Activated CD4-positive, alpha-beta T cell treated with anti-CD3 and anti-CD28 coated beads for 36 hours (primary cell): ENCODE measurements at regions of chr17 and their contacts with region 1.

Region 1: GRCh38 chr17:30124273-30124796 is 7.7 kb downstream of the NSRP1 start:
- DNase-seq: no peak
- ATAC-seq: no peak
- H3K4me3 Mint-ChIP-seq: no peak overlapping the region
- H3K27ac Mint-ChIP-seq: no peak overlapping the region
- H3K4me1 Mint-ChIP-seq: peaks cover 44% of the 10 kb centered on the region
- H3K27me3 Mint-ChIP-seq: no peaks in the 10 kb centered on the region

Region 2: DNA sequence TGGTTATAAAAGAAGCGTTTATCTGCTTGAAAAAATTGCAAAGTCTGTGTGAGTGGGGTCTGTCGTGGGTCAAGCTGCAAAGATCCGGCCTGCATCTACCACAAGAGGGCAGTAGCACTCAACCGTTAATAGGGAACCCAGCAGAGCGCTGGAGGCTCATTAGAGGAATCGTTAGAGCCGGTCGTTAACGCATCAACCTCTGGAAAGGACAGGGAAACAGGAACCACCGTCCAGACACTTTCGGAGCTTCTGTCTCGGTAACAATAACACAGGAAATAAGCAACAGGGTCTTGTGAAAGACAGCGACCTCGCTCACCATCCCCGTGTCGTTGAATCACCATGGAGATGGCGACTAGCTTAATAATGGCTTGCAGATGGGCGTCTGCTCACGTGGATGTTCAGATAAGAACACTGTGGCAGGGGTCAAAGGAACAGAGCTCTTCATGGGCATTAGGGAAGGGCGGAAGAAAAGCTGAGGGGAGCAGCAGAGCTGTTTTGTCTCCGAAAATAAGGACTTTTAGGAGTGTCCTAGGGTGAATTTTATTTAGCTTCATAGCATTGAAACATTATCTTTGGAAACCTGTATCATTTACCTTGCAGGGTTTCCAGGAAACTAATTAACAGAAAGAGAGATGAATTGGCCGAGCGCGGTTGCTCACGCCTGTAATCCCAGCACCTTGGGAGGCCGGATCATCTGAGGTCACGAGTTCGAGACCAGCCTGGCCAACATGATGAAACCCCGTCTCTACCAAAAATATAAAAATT is 19.6 kb before region 1 on chr17:
- CTCF ChIA-PET with region 1: interaction called, 19 read pairs
- POLR2A ChIA-PET with region 1: no interaction called
- intact Hi-C with region 1: no loop called
- DNase-seq: peak; percentile 81
- ATAC-seq: peak; percentile 97
- H3K4me3 Mint-ChIP-seq: peak overlapping the region; percentile 67
- H3K27ac Mint-ChIP-seq: peak overlapping the region; percentile 24
- H3K4me1 Mint-ChIP-seq: peaks cover 5% of the 10 kb centered on the region
- H3K27me3 Mint-ChIP-seq: peaks cover 2% of the 10 kb centered on the region

Region 3: GRCh38 chr17:30137158-30137557 is 12.8 kb after region 1 on chr17:
- CTCF ChIA-PET with region 1: interaction called, 16 read pairs
- POLR2A ChIA-PET with region 1: no interaction called
- intact Hi-C with region 1: no loop called
- DNase-seq: no peak
- ATAC-seq: no peak
- H3K4me3 Mint-ChIP-seq: no peak overlapping the region
- H3K27ac Mint-ChIP-seq: no peak overlapping the region
- H3K4me1 Mint-ChIP-seq: peaks cover 23% of the 10 kb centered on the region
- H3K27me3 Mint-ChIP-seq: no peaks in the 10 kb centered on the region

Region 4: DNA sequence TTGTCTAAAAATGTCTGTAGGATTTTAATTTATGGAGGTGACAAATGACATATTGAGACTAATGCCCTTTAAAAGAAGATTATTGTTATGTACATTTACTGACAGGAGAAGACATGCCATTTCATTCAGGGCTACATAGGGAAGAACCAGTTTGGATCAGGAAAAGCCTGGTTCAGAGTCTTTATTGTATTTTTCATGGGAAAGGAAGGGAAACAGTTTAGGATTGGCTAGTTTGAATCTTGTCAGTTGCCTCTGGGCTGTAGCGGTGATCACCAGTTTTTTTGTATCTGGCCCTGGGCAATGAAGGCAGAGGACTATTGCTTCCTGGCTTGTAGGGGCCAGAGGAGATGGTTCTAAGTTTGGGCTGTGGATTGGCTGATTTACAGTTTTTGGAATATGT is 24.0 kb after region 1 on chr17:
- CTCF ChIA-PET with region 1: interaction called, 13 read pairs
- POLR2A ChIA-PET with region 1: no interaction called
- intact Hi-C with region 1: no loop called
- DNase-seq: no peak
- ATAC-seq: no peak
- H3K4me3 Mint-ChIP-seq: no peak overlapping the region
- H3K27ac Mint-ChIP-seq: no peak overlapping the region
- H3K4me1 Mint-ChIP-seq: peaks cover 21% of the 10 kb centered on the region
- H3K27me3 Mint-ChIP-seq: no peaks in the 10 kb centered on the region

Region 5: GRCh38 chr17:30344283-30345088 is 220.2 kb after region 1 on chr17:
- CTCF ChIA-PET with region 1: interaction called, 15 read pairs
- POLR2A ChIA-PET with region 1: no interaction called
- intact Hi-C with region 1: no loop called
- DNase-seq: no peak
- ATAC-seq: no peak
- H3K4me3 Mint-ChIP-seq: no peak overlapping the region
- H3K27ac Mint-ChIP-seq: no peak overlapping the region
- H3K4me1 Mint-ChIP-seq: peaks cover 21% of the 10 kb centered on the region
- H3K27me3 Mint-ChIP-seq: no peaks in the 10 kb centered on the region